GM13977 (cell line): ENCODE measurements at regions of chr9 and their contacts with region 1.

Region 1: GRCh38 chr9:129783516-129784361 is 19.2 kb upstream of the TOR1B start:
- DNase-seq: peak; percentile 87
- CTCF ChIP-seq: peak; percentile 84

Region 2: GRCh38 chr9:129068990-129069861 is 714.5 kb before region 1 on chr9:
- in situ Hi-C with region 1: no loop called
- DNase-seq: peak; percentile 69
- CTCF ChIP-seq: no peak

Region 3: GRCh38 chr9:129139993-129140396 is 643.7 kb before region 1 on chr9:
- in situ Hi-C with region 1: loop called (anchors 25 kb)
- DNase-seq: peak; percentile 90
- CTCF ChIP-seq: no peak

Region 4: DNA sequence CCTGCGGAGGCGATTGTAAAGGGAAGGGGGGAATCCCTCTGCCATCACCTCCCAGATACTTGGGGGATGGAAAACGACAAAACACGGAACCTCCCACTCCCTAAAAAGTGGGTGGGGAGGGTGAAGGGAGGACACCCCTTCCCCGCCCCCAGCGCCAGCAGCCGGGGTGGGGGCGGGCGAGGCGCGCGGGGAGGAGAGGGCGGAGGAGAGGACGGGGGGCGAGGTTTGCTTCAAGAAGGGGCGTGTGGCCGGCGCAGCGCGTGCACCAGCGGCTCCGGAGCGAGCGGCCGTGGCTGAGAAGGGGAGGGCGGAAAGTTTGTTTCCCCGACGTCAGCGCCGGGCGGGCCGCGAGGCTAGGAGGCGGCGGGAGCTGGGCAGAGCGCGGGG is 118.4 kb before region 1 on chr9 and contains the start of gene PRRX2:
- in situ Hi-C with region 1: loop called (anchors 25 kb)
- DNase-seq: peak; percentile 54
- CTCF ChIP-seq: no peak

Region 5: GRCh38 chr9:129685220-129685932 is 98.4 kb before region 1 on chr9:
- in situ Hi-C with region 1: no loop called
- DNase-seq: no peak
- CTCF ChIP-seq: no peak

Region 6: GRCh38 chr9:129737479-129738274 is 46.1 kb before region 1 on chr9:
- in situ Hi-C with region 1: loop called (anchors 10 kb)
- DNase-seq: peak; percentile 91
- CTCF ChIP-seq: peak; percentile 92

Region 7: GRCh38 chr9:130254752-130255630 is 471.3 kb after region 1 on chr9:
- in situ Hi-C with region 1: no loop called
- DNase-seq: no peak
- CTCF ChIP-seq: no peak